SK-N-SH (cell line): ENCODE measurements at regions of chr10 and their contacts with region 1.

Region 1: DNA sequence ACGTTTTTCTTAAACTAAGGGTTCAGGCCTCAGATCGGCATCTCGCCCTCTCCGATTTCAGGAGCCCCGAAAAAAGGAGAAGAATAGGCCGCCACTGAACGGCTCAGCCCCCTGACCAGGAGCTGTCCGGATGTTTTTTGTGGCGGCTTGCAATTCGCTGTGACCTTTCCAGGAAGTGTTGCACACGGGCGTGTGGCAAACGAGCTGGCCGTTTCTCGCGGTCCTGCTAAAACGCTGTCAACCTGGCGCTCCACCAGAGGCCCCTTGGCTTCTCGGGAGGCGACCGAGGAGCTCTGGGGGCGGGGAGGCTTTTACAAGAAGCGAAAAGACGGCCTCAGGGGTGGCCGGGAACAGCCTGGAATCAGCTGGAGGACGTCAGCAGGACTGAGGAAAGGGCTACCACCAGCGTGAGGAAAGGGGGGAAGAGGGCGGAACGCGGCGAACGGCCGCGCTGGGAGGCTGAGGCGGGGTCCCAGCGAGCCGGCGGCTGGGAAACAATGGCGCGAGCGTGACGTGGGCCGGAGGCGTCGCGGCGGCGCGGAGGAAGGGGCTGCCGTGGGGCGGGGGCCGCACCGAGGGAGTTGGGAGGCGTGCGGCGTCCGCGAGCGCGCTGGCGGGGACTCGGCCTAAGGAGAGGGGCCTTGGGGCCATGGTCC is 493 bp downstream of the NT5C2 start:
- DNase-seq: peak; percentile 67
- H3K4me3 ChIP-seq: peak overlapping the region; percentile 77 to 89
- H3K27ac ChIP-seq: peak overlapping the region; percentile 91
- H3K4me1 ChIP-seq: peaks cover 8 to 9% of the 10 kb centered on the region in 2 experiments; a peak in 2 of 4 replicates
- H3K27me3 ChIP-seq: no peaks in the 10 kb centered on the region
- CTCF ChIP-seq: no peak
- EP300 ChIP-seq: no peak; a peak in 1 of 4 replicates
- RAD21 ChIP-seq: no peak

Region 2: DNA sequence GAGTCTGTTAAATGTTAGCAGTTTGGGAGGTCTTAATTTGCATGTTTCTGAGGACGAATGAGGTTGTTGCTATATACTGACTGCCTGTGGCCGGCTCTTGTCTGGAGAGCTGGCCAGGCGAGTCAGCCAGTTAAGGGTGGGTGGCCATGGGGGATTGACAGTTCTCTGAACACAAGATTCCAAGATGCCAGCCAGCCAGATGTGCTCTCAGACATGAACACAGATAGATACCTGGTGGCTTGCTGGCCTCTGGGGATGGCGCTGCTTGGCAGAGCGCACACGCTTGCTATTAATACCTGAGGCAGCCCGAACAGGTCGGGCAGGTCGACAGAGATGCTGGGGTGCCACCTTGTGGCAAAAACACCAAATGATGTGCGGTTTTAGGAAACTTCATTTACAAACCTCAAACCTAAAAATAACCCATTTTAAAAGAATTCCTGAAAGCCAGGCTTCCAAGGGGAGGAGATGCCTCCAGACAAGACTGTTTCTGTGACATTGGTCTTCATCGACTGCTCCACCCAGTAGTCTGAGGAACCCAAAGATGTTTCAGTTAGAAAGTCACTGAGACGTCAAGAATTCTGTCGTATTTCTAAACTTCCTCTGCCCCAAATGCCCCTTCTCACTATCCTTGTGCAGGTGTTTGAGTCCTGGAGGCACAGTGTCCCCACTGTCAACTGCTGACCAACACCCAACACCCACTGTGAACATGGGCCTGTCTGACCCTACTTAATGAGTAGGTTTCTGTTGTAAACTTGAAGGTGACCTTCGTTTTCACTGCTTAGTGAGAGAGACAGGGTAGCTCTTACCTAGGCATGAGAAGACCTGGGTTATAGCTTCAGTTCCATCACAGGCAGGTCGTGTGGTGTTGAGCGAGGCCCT is 122.9 kb before region 1 on chr10:
- CTCF ChIA-PET with region 1: no interaction called
- POLR2A ChIA-PET with region 1: no interaction called
- DNase-seq: peak; percentile 77
- H3K4me3 ChIP-seq: no peak overlapping the region; a peak in 1 of 4 replicates
- H3K27ac ChIP-seq: no peak overlapping the region
- H3K4me1 ChIP-seq: peaks cover 0 to 22% of the 10 kb centered on the region in 2 experiments; a peak in 1 of 4 replicates
- H3K27me3 ChIP-seq: no peaks in the 10 kb centered on the region
- CTCF ChIP-seq: peak; percentile 83
- EP300 ChIP-seq: no peak
- RAD21 ChIP-seq: peak; percentile 93

Region 3: GRCh38 chr10:103153302-103154197 is 39.0 kb before region 1 on chr10:
- CTCF ChIA-PET with region 1: no interaction called
- POLR2A ChIA-PET with region 1: no interaction called
- DNase-seq: no peak
- H3K4me3 ChIP-seq: no peak overlapping the region
- H3K27ac ChIP-seq: peak overlapping the region; percentile 19 to 58; a peak in 3 of 4 replicates
- H3K4me1 ChIP-seq: peaks cover 0 to 28% of the 10 kb centered on the region in 2 experiments; a peak in 2 of 4 replicates
- H3K27me3 ChIP-seq: no peaks in the 10 kb centered on the region
- CTCF ChIP-seq: no peak
- EP300 ChIP-seq: no peak
- RAD21 ChIP-seq: no peak

Region 4: DNA sequence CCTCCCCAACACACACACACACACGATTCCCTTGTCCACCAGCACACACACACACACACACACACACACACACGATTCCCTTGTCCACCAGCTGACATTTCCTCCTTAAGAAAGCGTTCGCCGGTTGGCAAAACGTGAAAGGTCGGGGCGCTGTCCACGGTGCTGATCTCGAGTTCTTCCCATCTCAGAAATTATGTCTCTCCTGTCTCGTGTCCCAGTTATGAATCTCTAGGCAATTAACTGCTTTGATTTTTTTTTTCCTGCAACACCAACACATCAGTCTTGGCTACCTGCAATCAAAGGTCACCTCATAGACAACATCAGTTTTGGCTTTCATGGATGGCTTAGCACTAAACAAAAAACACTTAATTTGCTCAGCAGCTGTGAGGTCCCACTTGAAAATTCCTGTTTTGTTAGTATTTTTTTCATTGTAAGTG is 86.3 kb after region 1 on chr10:
- CTCF ChIA-PET with region 1: interaction called, 4 read pairs
- POLR2A ChIA-PET with region 1: interaction called, 19 read pairs
- DNase-seq: no peak
- H3K4me3 ChIP-seq: peak overlapping the region in 1 of 2 experiments; percentile 54; a peak in 1 of 4 replicates
- H3K27ac ChIP-seq: no peak overlapping the region
- H3K4me1 ChIP-seq: peaks cover 1 to 22% of the 10 kb centered on the region in 2 experiments
- H3K27me3 ChIP-seq: peaks cover 6% of the 10 kb centered on the region; the same call in 1 of the 2 replicates
- CTCF ChIP-seq: no peak
- EP300 ChIP-seq: no peak
- RAD21 ChIP-seq: no peak